Activated T-helper 1 cell treated with anti-CD3 and anti-CD28 coated beads, Interleukin-12 subunit alpha, Interleukin-12 subunit beta, Interleukin-2, Interleukin-4 antibody, amounts not matched to agents 30 ng/mL and 10 ng/mL and 1 ng/mL, durations not matched to agents 14 hours and 24 hours and 36 hours (primary cell): ENCODE measurements at regions of chr9 and their contacts with region 1.

Region 1: GRCh38 chr9:109012876-109013678 is at the start of gene CTNNAL1:
- DNase-seq: peak; percentile 82
- H3K4me3 Mint-ChIP-seq: peak within 1 kb of the TSS; percentile 95
- H3K27ac Mint-ChIP-seq: peak within 1 kb of the TSS; percentile 94
- H3K4me1 Mint-ChIP-seq: peaks cover 39% of the 10 kb centered on the region
- H3K27me3 Mint-ChIP-seq: peaks cover 2% of the 10 kb centered on the region
- total RNA-seq, gene CTNNAL1: 24.8 and 25.1 TPM in 2 replicates

Region 2: DNA sequence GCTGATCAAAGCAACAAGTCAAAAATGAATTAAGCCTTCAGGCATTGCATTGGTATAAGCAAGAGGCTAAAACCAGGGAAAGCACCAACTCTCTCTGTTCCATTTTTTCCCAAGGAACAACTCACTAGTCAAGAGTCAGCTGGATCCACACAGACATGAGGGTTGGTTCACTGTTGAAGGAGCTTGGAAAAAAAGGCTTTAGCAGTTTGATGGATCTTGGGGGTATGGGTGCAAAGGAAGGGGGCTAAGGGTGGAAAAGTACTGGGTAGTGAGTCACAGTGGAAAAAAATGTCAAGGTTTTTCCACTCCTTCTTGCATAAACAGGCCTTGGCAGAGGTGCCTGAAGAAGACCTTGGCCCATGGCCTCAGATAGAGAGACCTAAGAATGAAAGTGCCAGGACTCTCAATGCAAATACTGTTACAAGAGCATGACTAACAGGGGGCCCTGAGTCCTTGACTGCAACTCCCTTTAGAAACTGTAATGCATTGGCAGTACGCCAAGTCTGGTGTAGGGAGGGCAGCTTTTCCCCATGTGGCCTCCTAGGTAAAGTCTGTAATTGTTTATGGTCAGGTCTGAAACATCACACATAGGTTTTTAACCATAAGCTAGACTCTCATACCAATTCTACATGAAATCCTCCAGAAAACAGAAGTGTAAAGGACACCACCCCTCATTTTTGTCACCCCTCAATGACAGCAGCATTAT is 127.3 kb before region 1 on chr9:
- intact Hi-C with region 1: loop called (anchors 5 kb)
- DNase-seq: no peak
- H3K4me3 Mint-ChIP-seq: peak overlapping the region; percentile 8
- H3K27ac Mint-ChIP-seq: peak overlapping the region; percentile 80
- H3K4me1 Mint-ChIP-seq: peaks cover 16% of the 10 kb centered on the region
- H3K27me3 Mint-ChIP-seq: no peaks in the 10 kb centered on the region

Region 3: DNA sequence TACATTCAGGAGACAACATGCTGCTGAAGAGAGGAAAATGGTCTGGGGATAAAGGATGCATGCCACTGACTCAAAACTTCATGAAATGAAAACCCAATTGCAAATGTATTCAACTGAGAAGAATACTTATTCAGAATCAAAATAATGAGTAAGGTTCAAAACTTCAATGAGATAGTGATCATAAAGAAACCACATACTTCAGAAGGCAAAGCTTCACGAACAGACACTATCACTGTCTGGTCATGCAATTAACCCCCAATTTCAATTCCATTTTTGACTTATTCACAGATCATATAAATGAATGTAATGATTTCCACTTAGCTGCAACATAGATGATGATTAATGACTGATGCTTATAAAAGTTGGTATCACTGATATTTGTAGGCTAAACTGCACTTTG is 33.3 kb after region 1 on chr9:
- intact Hi-C with region 1: loop called (anchors 2 kb)
- DNase-seq: no peak
- H3K4me3 Mint-ChIP-seq: no peak overlapping the region
- H3K27ac Mint-ChIP-seq: no peak overlapping the region
- H3K4me1 Mint-ChIP-seq: no peaks in the 10 kb centered on the region
- H3K27me3 Mint-ChIP-seq: no peaks in the 10 kb centered on the region

Region 4: DNA sequence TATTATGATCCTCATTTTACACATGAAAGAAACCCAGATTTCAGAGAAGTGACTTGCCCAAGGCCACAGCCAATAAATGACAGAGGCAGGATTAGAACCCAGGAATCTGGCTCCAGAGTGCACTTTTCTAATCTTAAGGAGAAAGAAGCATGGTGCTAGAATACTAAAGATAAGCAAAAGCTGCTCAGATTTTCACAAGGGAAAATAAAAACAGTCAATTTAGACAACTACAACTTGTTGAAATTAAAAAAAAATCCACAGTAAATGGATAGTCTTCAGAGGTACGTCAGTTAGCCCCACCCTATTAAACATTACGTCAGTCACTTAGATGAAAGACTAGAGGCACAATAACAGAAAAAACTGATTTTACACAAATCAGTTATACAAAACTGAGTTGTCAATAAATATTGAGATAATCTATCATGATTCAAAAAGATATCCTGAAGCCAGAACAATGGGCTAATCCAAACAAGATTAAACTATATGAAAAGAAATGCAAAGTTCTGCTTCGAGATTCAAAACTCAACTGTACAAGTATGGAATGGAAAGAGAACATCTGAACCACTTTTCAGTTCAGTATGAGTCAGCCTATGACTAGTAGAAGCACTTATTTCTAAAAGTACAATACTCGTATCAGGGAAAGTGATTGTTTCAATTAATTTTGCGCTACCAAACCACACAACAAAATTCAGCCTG is 97.4 kb after region 1 on chr9:
- intact Hi-C with region 1: loop called (anchors 2 kb)
- DNase-seq: no peak
- H3K4me3 Mint-ChIP-seq: peak overlapping the region; percentile 51
- H3K27ac Mint-ChIP-seq: peak overlapping the region; percentile 85
- H3K4me1 Mint-ChIP-seq: peaks cover 74% of the 10 kb centered on the region
- H3K27me3 Mint-ChIP-seq: no peaks in the 10 kb centered on the region

Region 5: DNA sequence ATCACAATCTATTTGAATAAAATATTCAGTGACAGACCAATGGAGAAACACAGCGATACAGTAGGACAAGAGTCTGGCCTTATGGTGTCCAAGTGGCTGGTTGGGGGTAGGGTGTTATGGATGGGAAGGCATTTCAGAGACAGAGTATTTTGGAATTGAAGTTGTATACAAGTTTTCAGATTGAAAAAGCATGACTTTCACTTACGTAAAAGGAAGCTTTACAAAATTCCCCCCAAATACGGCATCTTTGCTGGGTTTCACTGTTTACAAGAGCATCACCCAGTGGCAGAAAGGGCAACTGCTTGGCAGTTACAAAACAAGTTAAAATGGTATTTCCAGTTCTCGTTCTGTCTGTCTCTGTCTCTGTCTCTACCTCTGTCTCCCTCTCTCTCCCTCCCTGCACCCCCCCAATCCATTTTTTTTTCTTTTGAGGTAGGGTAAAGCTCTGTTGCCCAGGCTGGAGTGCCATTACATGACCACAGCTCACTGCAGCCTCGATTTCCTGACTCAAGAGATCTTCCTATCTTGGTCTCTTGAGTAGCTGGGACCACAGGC is 398.8 kb after region 1 on chr9:
- intact Hi-C with region 1: loop called (anchors 2 kb)
- DNase-seq: no peak
- H3K4me3 Mint-ChIP-seq: peak overlapping the region; percentile 32
- H3K27ac Mint-ChIP-seq: peak overlapping the region; percentile 92
- H3K4me1 Mint-ChIP-seq: peaks cover 73% of the 10 kb centered on the region
- H3K27me3 Mint-ChIP-seq: no peaks in the 10 kb centered on the region